GM12878 (cell line): ENCODE measurements at regions of chr10 and their contacts with region 1.

Region 1: DNA sequence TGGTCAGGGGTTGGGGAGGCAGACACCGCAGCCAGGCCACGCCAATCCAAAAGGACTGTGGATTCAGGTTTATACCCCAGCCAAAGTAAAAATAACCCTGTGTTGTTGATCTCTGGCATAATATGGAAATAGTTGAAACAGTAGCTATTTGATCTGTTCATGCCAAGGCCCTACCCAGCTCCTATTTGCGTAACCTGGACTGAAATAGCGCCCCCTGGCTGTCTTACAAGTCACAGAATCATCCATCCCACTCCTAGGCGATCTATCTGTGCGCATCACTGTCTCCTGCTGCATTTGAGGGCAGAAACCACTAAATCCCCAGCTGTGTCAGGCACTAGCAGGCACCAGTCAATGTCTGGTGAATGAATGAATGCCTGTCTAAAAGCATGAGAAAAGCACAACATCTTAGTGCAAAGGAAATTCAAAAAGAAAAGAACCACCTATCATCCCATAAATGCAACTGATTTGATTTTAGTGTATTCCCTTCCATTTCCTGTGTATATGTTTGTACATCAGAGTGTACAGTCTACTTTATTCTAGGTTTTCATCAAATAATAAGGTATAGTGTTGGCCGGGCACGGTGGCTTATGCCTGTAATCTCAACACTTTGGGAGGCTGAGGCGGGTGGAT is 160.0 kb downstream of the SLIT1 start:
- DNase-seq: peak; percentile 31
- ATAC-seq: peak; percentile 84
- H3K4me3 ChIP-seq: no peak overlapping the region
- H3K27ac ChIP-seq: no peak overlapping the region
- H3K4me1 ChIP-seq: peaks cover 25% of the 10 kb centered on the region
- H3K27me3 ChIP-seq: no peaks in the 10 kb centered on the region; a peak in 1 of 4 replicates
- CTCF ChIP-seq: peak; percentile 73 to 84 (median 75)
- EP300 ChIP-seq: no peak
- POLR2A ChIP-seq: no peak
- RAD21 ChIP-seq: peak; percentile 69

Region 2: GRCh38 chr10:96374985-96375830 is 650.5 kb before region 1 on chr10:
- CTCF ChIA-PET with region 1: interaction called, 5 read pairs
- POLR2A ChIA-PET with region 1: no interaction called
- RAD21 ChIA-PET with region 1: interaction called, 4 read pairs
- SMC1A ChIA-PET with region 1: interaction called, 4 read pairs
- in situ Hi-C with region 1: no loop called
- intact Hi-C with region 1: loop called (anchors 5 kb)
- DNase-seq: peak; percentile 45
- ATAC-seq: peak; percentile 91
- H3K4me3 ChIP-seq: peak overlapping the region; percentile 68; the same call in 1 of the 2 replicates
- H3K27ac ChIP-seq: no peak overlapping the region
- H3K4me1 ChIP-seq: peaks cover 8% of the 10 kb centered on the region
- H3K27me3 ChIP-seq: no peaks in the 10 kb centered on the region; a peak in 1 of 4 replicates
- CTCF ChIP-seq: peak; percentile 98 to 100 (median 99)
- EP300 ChIP-seq: no peak
- POLR2A ChIP-seq: no peak
- RAD21 ChIP-seq: peak; percentile 87

Region 3: GRCh38 chr10:96831867-96832720 is 193.6 kb before region 1 on chr10 and contains the start of gene LCOR:
- CTCF ChIA-PET with region 1: interaction called, 15 read pairs
- POLR2A ChIA-PET with region 1: no interaction called
- RAD21 ChIA-PET with region 1: interaction called, 11 read pairs
- SMC1A ChIA-PET with region 1: interaction called, 15 read pairs
- in situ Hi-C with region 1: no loop called
- intact Hi-C with region 1: loop called (anchors 2 kb)
- DNase-seq: no peak
- ATAC-seq: peak; percentile 64
- H3K4me3 ChIP-seq: peak within 1 kb of the TSS; percentile 100
- H3K27ac ChIP-seq: peak within 1 kb of the TSS; percentile 80
- H3K4me1 ChIP-seq: peaks cover 12% of the 10 kb centered on the region
- H3K27me3 ChIP-seq: no peaks in the 10 kb centered on the region
- CTCF ChIP-seq: no peak
- EP300 ChIP-seq: no peak
- POLR2A ChIP-seq: peak; percentile 90
- RAD21 ChIP-seq: no peak
- polyA plus RNA-seq, gene LCOR: 1.6 to 6.1 TPM

Region 4: GRCh38 chr10:96896884-96897589 is 128.7 kb before region 1 on chr10:
- CTCF ChIA-PET with region 1: interaction called, 5 read pairs
- POLR2A ChIA-PET with region 1: no interaction called
- RAD21 ChIA-PET with region 1: interaction called, 3 read pairs
- SMC1A ChIA-PET with region 1: interaction called, 14 read pairs
- in situ Hi-C with region 1: no loop called
- intact Hi-C with region 1: no loop called
- DNase-seq: no peak
- ATAC-seq: peak; percentile 85
- H3K4me3 ChIP-seq: no peak overlapping the region
- H3K27ac ChIP-seq: no peak overlapping the region
- H3K4me1 ChIP-seq: peaks cover 5% of the 10 kb centered on the region; the same call in 1 of the 2 replicates
- H3K27me3 ChIP-seq: no peaks in the 10 kb centered on the region
- CTCF ChIP-seq: no peak
- EP300 ChIP-seq: no peak
- POLR2A ChIP-seq: no peak
- RAD21 ChIP-seq: no peak

Region 5: DNA sequence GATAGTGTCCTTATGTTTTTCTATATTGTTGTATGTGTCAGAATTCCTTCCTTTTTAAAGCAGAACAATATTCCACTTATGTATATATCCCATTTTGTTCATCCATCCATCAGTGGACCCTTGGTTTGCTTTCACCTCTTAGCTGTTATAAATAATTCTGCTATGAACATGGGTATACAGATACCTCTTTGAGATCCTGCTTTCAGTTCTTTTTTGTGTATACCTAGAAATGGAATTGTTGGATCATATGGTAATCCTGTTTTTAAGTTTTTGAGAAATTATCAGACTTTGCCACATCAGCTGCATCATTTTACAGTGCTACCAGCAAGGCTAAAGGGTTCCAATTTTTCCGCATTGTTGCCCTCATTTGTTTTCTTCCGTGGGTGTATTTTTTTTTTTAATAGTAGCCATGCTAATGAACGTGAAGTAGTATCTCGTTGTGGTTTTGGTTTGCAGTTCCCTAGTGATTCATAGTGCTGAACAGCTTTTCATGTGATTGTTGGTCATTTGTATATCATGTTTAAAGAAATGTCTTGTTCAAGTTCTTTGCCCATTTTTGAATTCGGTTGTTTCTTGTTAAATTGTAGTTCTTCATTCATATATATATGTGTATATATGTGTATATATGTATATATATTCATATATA is 105.8 kb before region 1 on chr10:
- CTCF ChIA-PET with region 1: interaction called, 26 read pairs
- POLR2A ChIA-PET with region 1: no interaction called
- RAD21 ChIA-PET with region 1: interaction called, 7 read pairs
- SMC1A ChIA-PET with region 1: interaction called, 6 read pairs
- in situ Hi-C with region 1: no loop called
- intact Hi-C with region 1: no loop called
- DNase-seq: peak; percentile 23
- ATAC-seq: peak; percentile 74
- H3K4me3 ChIP-seq: no peak overlapping the region
- H3K27ac ChIP-seq: peak overlapping the region; percentile 33; the same call in 1 of the 2 replicates
- H3K4me1 ChIP-seq: peaks cover 15% of the 10 kb centered on the region
- H3K27me3 ChIP-seq: no peaks in the 10 kb centered on the region
- CTCF ChIP-seq: no peak
- EP300 ChIP-seq: no peak
- POLR2A ChIP-seq: no peak
- RAD21 ChIP-seq: no peak

Region 6: GRCh38 chr10:96960872-96961271 is 64.9 kb before region 1 on chr10:
- CTCF ChIA-PET with region 1: interaction called, 27 read pairs
- POLR2A ChIA-PET with region 1: no interaction called
- RAD21 ChIA-PET with region 1: interaction called, 8 read pairs
- SMC1A ChIA-PET with region 1: interaction called, 30 read pairs
- in situ Hi-C with region 1: no loop called
- intact Hi-C with region 1: no loop called
- DNase-seq: no peak
- ATAC-seq: no peak
- H3K4me3 ChIP-seq: no peak overlapping the region
- H3K27ac ChIP-seq: no peak overlapping the region
- H3K4me1 ChIP-seq: no peaks in the 10 kb centered on the region
- H3K27me3 ChIP-seq: no peaks in the 10 kb centered on the region
- CTCF ChIP-seq: no peak
- EP300 ChIP-seq: no peak
- POLR2A ChIP-seq: no peak
- RAD21 ChIP-seq: no peak

Region 7: GRCh38 chr10:96991313-96991841 is 34.4 kb before region 1 on chr10:
- CTCF ChIA-PET with region 1: interaction called, 85 read pairs
- POLR2A ChIA-PET with region 1: interaction called, 3 read pairs
- RAD21 ChIA-PET with region 1: interaction called, 15 read pairs
- SMC1A ChIA-PET with region 1: interaction called, 96 read pairs
- in situ Hi-C with region 1: no loop called
- intact Hi-C with region 1: no loop called
- DNase-seq: no peak
- ATAC-seq: peak; percentile 78
- H3K4me3 ChIP-seq: no peak overlapping the region
- H3K27ac ChIP-seq: no peak overlapping the region
- H3K4me1 ChIP-seq: peaks cover 22% of the 10 kb centered on the region
- H3K27me3 ChIP-seq: no peaks in the 10 kb centered on the region
- CTCF ChIP-seq: no peak
- EP300 ChIP-seq: no peak
- POLR2A ChIP-seq: no peak
- RAD21 ChIP-seq: no peak

Region 8: DNA sequence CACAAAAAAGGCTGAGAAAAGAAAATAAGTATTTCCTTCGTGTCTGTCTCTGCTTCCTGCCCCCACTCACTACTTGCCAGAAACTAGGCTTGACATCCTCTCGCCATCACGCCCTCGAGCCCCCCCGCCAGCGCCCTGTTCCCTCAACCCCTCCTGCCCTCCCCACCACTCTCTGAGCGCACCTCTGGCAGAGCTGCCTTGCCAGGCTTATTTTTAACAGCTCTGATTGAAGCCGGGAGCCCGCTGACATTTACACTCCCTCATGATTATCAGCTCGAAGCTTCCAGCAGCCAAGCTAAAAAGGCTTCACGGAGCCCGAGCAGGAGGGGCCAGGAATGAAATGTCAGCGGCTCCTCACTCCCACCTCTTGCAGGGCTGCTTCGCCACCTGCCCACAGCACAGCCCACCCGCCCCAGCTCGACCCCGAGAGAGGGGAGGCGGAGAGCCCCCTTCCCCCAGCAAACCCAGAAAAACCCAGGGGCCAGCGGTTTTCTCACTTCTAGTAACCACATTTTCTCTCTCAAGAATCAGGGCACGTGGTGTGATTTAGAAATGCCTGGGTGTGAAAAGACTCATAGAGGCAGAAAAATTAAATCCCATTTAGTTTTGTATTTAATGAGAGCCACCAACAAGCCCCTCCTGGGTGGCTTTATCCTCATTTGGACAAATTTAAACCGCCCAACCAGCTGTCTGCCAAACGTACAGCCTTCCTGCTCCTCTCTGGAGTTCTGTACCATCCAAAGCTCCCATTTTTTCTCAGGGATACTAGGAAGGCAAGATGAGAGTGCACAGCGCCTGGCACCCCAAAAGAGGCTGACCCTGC is 70.7 kb after region 1 on chr10:
- CTCF ChIA-PET with region 1: no interaction called
- POLR2A ChIA-PET with region 1: no interaction called
- RAD21 ChIA-PET with region 1: no interaction called
- SMC1A ChIA-PET with region 1: no interaction called
- in situ Hi-C with region 1: no loop called
- intact Hi-C with region 1: no loop called
- DNase-seq: no peak
- ATAC-seq: peak; percentile 62
- H3K4me3 ChIP-seq: no peak overlapping the region
- H3K27ac ChIP-seq: no peak overlapping the region
- H3K4me1 ChIP-seq: peaks cover 3% of the 10 kb centered on the region; the same call in 1 of the 2 replicates
- H3K27me3 ChIP-seq: peaks cover 0 to 5% of the 10 kb centered on the region in 2 experiments
- CTCF ChIP-seq: no peak
- EP300 ChIP-seq: no peak
- POLR2A ChIP-seq: no peak
- RAD21 ChIP-seq: no peak

Region 9: DNA sequence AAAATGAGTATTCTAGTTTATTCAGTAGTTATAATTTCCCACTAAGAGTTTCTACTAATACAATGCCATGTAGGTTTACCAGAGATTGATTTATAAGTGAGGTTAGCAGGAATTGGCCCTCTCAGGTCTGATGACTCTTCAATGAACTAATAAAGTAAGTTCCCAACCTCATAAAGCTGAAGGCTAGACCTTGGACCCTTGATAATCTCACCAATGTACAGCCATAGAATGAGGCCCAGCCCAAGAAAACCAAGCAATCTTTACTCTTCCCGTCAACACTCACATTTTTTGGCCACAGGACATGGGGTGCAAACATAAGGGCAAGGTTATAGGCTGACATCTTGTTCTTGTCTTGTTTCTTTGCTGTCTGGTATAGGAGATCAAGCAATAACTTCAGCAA is 233.4 kb after region 1 on chr10:
- CTCF ChIA-PET with region 1: no interaction called
- POLR2A ChIA-PET with region 1: no interaction called
- RAD21 ChIA-PET with region 1: no interaction called
- SMC1A ChIA-PET with region 1: no interaction called
- in situ Hi-C with region 1: no loop called
- intact Hi-C with region 1: no loop called
- DNase-seq: no peak
- ATAC-seq: no peak
- H3K4me3 ChIP-seq: no peak overlapping the region
- H3K27ac ChIP-seq: no peak overlapping the region
- H3K4me1 ChIP-seq: no peaks in the 10 kb centered on the region
- H3K27me3 ChIP-seq: no peaks in the 10 kb centered on the region
- CTCF ChIP-seq: no peak
- EP300 ChIP-seq: no peak
- POLR2A ChIP-seq: no peak
- RAD21 ChIP-seq: no peak